Tibial artery (tissue), 4 donors: ENCODE measurements at regions of chr3 and their contacts with region 1.

Region 1: GRCh38 chr3:24264748-24265158 is 229.9 kb downstream of the THRB start:
- DNase-seq: no peak
- H3K4me3 ChIP-seq: no peak overlapping the region
- H3K27ac ChIP-seq: no peak overlapping the region
- H3K4me1 ChIP-seq: peaks cover 0 to 42% (median 14%) of the 10 kb centered on the region in 4 donors
- H3K27me3 ChIP-seq: no peaks in the 10 kb centered on the region
- CTCF ChIP-seq: peak; percentile 60 to 62

Region 2: GRCh38 chr3:24351779-24352469 is 87.2 kb after region 1 on chr3:
- intact Hi-C with region 1: loop called (anchors 5 kb)
- DNase-seq: peak; percentile 74 to 75
- H3K4me3 ChIP-seq: no peak overlapping the region
- H3K27ac ChIP-seq: peak overlapping the region; percentile 68 to 80
- H3K4me1 ChIP-seq: peaks cover 0 to 65% (median 33%) of the 10 kb centered on the region in 4 donors
- H3K27me3 ChIP-seq: no peaks in the 10 kb centered on the region
- CTCF ChIP-seq: no peak

Region 3: GRCh38 chr3:25074149-25074548 is 809.4 kb after region 1 on chr3:
- intact Hi-C with region 1: no loop called
- DNase-seq: no peak
- H3K4me3 ChIP-seq: no peak overlapping the region
- H3K27ac ChIP-seq: no peak overlapping the region
- H3K4me1 ChIP-seq: no peaks in the 10 kb centered on the region
- H3K27me3 ChIP-seq: no peaks in the 10 kb centered on the region
- CTCF ChIP-seq: no peak